ENCODE measurements at regions of chr6 and their contacts with region 1.

Region 1: GRCh38 chr6:33248925-33249731 is 22.5 kb downstream of the VPS52 start:
- DNase-seq: peak; percentile 99
- H3K4me3 ChIP-seq: peak overlapping the region; percentile 45 to 58
- H3K27ac ChIP-seq: peak overlapping the region; percentile 96
- H3K4me1 ChIP-seq: peaks cover 27% of the 10 kb centered on the region
- H3K27me3 ChIP-seq: no peaks in the 10 kb centered on the region
- CTCF ChIP-seq: peak in 2 of 3 experiments; percentile 13 to 24
- POLR2A ChIP-seq: peak in 1 of 2 donors; percentile 71

Region 2: GRCh38 chr6:33014841-33015634 is 234.1 kb before region 1 on chr6:
- intact Hi-C with region 1: loop called (anchors 5 kb)
- DNase-seq: no peak
- H3K4me3 ChIP-seq: no peak overlapping the region
- H3K27ac ChIP-seq: peak overlapping the region; percentile 35
- H3K4me1 ChIP-seq: peaks cover 16% of the 10 kb centered on the region
- H3K27me3 ChIP-seq: no peaks in the 10 kb centered on the region
- CTCF ChIP-seq: peak; percentile 78 to 81 (median 79)
- POLR2A ChIP-seq: no peak

Region 3: GRCh38 chr6:33112148-33112547 is 137.0 kb before region 1 on chr6:
- intact Hi-C with region 1: loop called (anchors 10 kb)
- DNase-seq: no peak
- H3K4me3 ChIP-seq: no peak overlapping the region
- H3K27ac ChIP-seq: no peak overlapping the region
- H3K4me1 ChIP-seq: no peaks in the 10 kb centered on the region
- H3K27me3 ChIP-seq: no peaks in the 10 kb centered on the region
- CTCF ChIP-seq: no peak
- POLR2A ChIP-seq: no peak

Region 4: GRCh38 chr6:33161354-33162331 is 87.5 kb before region 1 on chr6:
- intact Hi-C with region 1: loop called (anchors 5 kb)
- DNase-seq: no peak
- H3K4me3 ChIP-seq: peak overlapping the region; percentile 45 to 46
- H3K27ac ChIP-seq: peak overlapping the region; percentile 78
- H3K4me1 ChIP-seq: peaks cover 18% of the 10 kb centered on the region
- H3K27me3 ChIP-seq: no peaks in the 10 kb centered on the region
- CTCF ChIP-seq: peak; percentile 66 to 94 (median 83)
- POLR2A ChIP-seq: no peak

Region 5: GRCh38 chr6:33235221-33235634 is 13.9 kb before region 1 on chr6:
- intact Hi-C with region 1: no loop called
- DNase-seq: no peak
- H3K4me3 ChIP-seq: no peak overlapping the region
- H3K27ac ChIP-seq: no peak overlapping the region
- H3K4me1 ChIP-seq: no peaks in the 10 kb centered on the region
- H3K27me3 ChIP-seq: no peaks in the 10 kb centered on the region
- CTCF ChIP-seq: no peak
- POLR2A ChIP-seq: no peak

Region 6: GRCh38 chr6:33264015-33264414 is 14.9 kb after region 1 on chr6:
- intact Hi-C with region 1: no loop called
- DNase-seq: no peak
- H3K4me3 ChIP-seq: no peak overlapping the region
- H3K27ac ChIP-seq: no peak overlapping the region
- H3K4me1 ChIP-seq: no peaks in the 10 kb centered on the region
- H3K27me3 ChIP-seq: no peaks in the 10 kb centered on the region
- CTCF ChIP-seq: no peak
- POLR2A ChIP-seq: no peak

Region 7: DNA sequence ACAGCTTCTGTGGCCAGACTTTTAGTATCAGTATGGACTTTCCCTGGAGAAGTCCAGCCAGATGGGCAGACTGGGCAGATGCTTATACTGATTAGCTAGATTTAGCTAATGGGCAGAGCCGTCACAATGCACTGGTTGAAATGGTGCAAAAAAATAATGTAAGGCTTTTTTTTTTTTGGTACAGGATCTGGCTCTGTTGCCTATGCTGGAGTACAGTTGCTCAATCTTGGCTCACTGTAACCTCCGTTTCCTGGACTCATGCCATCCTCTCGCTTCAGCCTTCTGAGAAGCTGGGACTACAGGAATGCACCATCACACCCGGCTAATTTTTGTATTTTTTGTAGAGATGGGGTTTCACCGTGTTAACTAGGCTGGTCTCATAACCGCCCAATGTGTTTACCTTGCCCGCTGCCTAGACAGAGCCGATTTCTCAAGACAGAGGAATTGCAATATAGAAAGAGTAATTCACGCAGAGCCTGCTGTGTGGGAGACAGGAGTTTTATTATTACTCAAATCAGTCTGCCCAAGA is 126.1 kb after region 1 on chr6:
- intact Hi-C with region 1: no loop called
- DNase-seq: no peak
- H3K4me3 ChIP-seq: no peak overlapping the region
- H3K27ac ChIP-seq: peak overlapping the region; percentile 85
- H3K4me1 ChIP-seq: peaks cover 39% of the 10 kb centered on the region
- H3K27me3 ChIP-seq: no peaks in the 10 kb centered on the region
- CTCF ChIP-seq: no peak
- POLR2A ChIP-seq: no peak

Region 8: GRCh38 chr6:33696548-33697518 is 447.7 kb after region 1 on chr6:
- intact Hi-C with region 1: no loop called
- DNase-seq: no peak
- H3K4me3 ChIP-seq: no peak overlapping the region
- H3K27ac ChIP-seq: peak overlapping the region; percentile 83
- H3K4me1 ChIP-seq: peaks cover 56% of the 10 kb centered on the region
- H3K27me3 ChIP-seq: no peaks in the 10 kb centered on the region
- CTCF ChIP-seq: no peak
- POLR2A ChIP-seq: no peak

Measured in vagina (tissue), 2 donors.